Ascending aorta (tissue), 2 donors: ENCODE measurements at regions of chr3 and their contacts with region 1.

Region 1: GRCh38 chr3:113736548-113737089 is 9.4 kb downstream of the NAA50 start:
- DNase-seq: no peak
- H3K4me3 ChIP-seq: no peak overlapping the region
- H3K27ac ChIP-seq: no peak overlapping the region
- H3K4me1 ChIP-seq: peaks cover 0 to 5% of the 10 kb centered on the region in 2 donors
- H3K27me3 ChIP-seq: no peaks in the 10 kb centered on the region
- CTCF ChIP-seq: peak; percentile 56 to 70 (median 69)

Region 2: GRCh38 chr3:112437146-112438022 is 1299.2 kb before region 1 on chr3:
- intact Hi-C with region 1: no loop called
- DNase-seq: no peak
- H3K4me3 ChIP-seq: no peak overlapping the region
- H3K27ac ChIP-seq: no peak overlapping the region
- H3K4me1 ChIP-seq: no peaks in the 10 kb centered on the region
- H3K27me3 ChIP-seq: no peaks in the 10 kb centered on the region
- CTCF ChIP-seq: peak in 1 of 3 experiments; percentile 28

Region 3: GRCh38 chr3:113795693-113796092 is 59.1 kb after region 1 on chr3:
- intact Hi-C with region 1: loop called (anchors 5 kb)
- DNase-seq: no peak
- H3K4me3 ChIP-seq: no peak overlapping the region
- H3K27ac ChIP-seq: no peak overlapping the region
- H3K4me1 ChIP-seq: no peaks in the 10 kb centered on the region
- H3K27me3 ChIP-seq: no peaks in the 10 kb centered on the region
- CTCF ChIP-seq: no peak

Region 4: DNA sequence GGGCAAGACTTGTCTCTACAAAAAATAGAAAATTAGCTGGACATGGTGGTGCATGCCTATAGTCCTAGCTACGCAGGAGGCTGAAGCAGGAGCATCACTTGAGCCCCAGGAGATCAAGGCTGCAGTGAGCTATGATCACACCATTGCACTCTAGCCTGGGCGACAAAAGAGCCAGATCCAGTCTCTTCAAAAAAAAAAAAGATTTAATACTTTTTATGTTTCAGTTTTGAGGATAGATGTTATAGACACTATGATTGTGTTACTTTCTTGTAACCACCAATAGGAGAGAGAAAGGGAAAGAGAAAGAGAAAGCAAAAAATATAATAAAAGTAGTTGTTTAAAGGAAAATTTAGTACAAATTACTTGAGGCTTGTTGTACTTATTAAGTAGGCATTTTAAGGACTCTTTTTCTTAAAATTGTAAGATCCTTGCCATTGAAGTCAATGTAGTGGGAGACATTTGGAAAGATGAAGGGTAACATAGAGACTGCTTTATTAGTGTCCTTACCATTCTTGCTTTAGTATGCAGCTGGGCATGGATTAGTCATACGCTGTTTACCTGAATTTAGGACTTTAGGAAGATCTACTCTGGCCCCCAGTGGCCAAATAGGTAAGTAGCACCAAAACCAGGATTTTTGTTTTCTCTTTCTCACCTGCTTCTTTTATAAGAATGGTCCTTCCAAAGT is 176.1 kb after region 1 on chr3:
- intact Hi-C with region 1: loop called (anchors 10 kb)
- DNase-seq: no peak
- H3K4me3 ChIP-seq: no peak overlapping the region
- H3K27ac ChIP-seq: no peak overlapping the region
- H3K4me1 ChIP-seq: no peaks in the 10 kb centered on the region
- H3K27me3 ChIP-seq: no peaks in the 10 kb centered on the region
- CTCF ChIP-seq: peak in 2 of 3 experiments; percentile 14 to 24